Activated B cell treated with CpG ODN at 0.5 μM for 24 hours (primary cell): ENCODE measurements at regions of chr9 and their contacts with region 1.

Region 1: DNA sequence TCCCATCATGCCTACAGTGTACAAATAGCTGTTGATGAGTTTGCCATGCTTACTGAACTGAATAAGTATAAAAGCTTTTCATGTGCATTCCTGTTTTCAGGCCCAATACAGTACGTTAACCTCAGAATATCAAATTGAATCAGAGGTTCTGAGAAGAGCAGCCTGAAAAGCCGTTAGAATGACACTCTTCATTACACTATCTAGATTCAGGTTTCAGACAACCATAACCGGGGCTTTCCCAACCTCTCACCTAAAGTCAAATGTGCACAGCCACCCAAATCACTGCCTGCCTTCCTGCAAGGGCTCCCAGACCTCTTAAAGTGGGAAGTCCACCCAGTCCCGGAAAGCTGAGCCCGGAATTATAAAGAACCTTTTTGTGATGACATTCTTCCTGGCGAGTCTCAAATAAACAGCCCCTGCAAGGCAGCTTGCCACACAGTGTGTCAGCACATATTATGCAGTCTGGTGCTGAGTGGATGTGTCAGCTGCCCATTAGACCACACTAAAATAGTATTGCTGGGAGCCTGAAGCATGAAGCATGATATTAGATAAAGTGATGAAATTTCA is 245.8 kb downstream of the TLE4 start:
- DNase-seq: peak; percentile 24
- ATAC-seq: peak; percentile 72
- H3K4me3 Mint-ChIP-seq: peak overlapping the region; percentile 17
- H3K27ac Mint-ChIP-seq: peak overlapping the region; percentile 47
- H3K4me1 Mint-ChIP-seq: peaks cover 52% of the 10 kb centered on the region
- H3K27me3 Mint-ChIP-seq: peaks cover 2% of the 10 kb centered on the region
- CTCF ChIP-seq: no peak

Region 2: DNA sequence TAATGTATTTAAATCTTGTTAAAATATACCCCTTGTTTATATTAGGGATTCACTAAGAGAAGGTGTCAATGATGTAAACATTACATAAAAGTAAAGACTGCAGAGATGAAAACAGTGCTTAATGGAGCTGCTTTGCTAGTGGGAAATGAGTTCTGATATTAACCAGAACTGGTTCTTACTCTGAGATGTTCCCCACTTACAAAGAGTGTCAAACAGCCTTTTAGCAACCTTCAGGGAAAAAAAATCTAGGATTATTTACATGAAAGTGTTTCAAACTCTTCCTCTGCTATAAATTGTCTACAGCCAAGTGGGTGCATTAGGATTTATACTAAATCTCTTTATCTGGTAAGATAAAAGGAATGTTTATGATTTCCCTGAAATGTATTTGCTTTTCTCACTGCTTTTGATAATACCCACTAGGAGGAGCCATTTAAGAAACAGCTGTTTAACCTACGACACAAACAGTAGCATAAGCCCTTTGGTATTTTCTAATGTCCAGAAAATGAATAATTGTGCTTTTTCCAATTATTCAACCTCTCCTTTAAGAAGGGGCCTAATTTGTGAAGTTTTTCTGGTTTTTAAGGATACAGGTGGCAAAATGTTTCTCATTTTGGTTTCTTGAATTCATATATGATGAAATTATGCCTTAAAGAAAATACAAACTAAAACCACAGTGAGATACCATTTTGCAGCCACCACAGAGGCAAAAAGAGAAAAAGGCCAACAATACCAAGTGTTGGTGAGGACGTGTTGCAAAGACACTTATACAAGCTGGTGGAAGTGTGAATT is 59.4 kb before region 1 on chr9:
- CTCF ChIA-PET with region 1: no interaction called
- POLR2A ChIA-PET with region 1: no interaction called
- intact Hi-C with region 1: loop called (anchors 2 kb)
- DNase-seq: no peak
- ATAC-seq: no peak
- H3K4me3 Mint-ChIP-seq: no peak overlapping the region
- H3K27ac Mint-ChIP-seq: no peak overlapping the region
- H3K4me1 Mint-ChIP-seq: no peaks in the 10 kb centered on the region
- H3K27me3 Mint-ChIP-seq: no peaks in the 10 kb centered on the region
- CTCF ChIP-seq: no peak

Region 3: DNA sequence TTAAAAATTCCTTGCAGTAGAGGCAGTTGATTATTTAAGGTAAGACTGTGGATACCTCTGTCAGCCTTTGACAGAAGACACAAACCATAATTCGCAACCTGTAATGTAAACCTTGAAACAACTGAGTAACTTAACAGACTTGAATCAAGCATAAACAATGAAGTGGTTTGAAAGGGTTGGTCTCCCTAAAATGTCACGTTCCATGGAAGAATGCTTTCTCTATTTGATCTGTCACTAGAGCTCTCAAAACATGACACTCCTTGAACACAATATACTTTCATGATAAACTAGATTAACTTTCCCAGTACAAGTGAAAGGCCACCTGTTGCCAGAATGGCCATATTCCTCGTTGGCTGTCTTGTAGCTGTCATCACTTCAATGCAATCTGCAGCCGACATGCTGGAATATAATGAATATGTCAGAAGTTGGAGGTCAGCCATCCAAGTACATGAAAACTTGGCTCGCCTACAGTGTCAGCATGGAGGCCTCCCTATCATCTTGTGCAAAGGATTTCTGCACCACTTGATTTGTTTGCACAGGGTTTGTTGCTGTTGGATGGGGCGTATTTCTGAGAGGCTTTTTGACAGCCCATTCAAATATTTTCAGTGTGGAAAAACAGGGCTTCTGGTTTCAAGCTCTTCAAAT is 17.7 kb before region 1 on chr9:
- CTCF ChIA-PET with region 1: no interaction called
- POLR2A ChIA-PET with region 1: no interaction called
- intact Hi-C with region 1: no loop called
- DNase-seq: no peak
- ATAC-seq: no peak
- H3K4me3 Mint-ChIP-seq: no peak overlapping the region
- H3K27ac Mint-ChIP-seq: no peak overlapping the region
- H3K4me1 Mint-ChIP-seq: no peaks in the 10 kb centered on the region
- H3K27me3 Mint-ChIP-seq: no peaks in the 10 kb centered on the region
- CTCF ChIP-seq: no peak

Region 4: DNA sequence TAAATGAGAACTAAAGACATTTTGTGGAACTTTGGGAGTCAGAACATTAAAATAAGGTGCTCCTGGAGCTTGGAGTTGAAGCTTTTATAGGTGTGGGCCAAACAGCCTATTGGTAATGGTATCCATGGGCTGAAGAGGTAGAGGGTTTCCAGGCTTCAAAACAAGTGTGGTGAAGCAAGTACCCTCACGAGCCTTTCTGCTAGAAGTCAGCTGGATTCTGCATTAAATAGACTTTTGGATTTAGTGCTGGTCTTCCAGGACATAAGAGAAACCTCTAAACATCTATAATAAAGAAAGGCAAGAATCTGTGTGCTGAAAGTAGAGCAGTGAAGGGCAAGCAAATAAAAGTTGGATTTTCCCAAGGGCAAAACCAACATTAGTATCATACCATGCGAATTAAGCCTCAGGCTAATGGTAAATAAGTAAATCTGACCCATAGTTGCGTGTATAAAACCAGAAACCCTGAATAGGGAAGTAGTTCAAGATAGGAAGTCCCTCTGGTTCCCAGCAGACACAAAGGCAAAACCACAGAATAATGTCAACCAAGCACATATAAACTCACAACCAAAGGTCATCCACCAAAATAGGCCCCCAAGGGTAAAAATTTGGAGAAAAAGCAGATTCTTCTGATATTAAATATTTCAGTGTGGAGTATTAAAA is 60.6 kb after region 1 on chr9:
- CTCF ChIA-PET with region 1: no interaction called
- POLR2A ChIA-PET with region 1: interaction called, 6 read pairs
- intact Hi-C with region 1: loop called (anchors 1 kb)
- DNase-seq: no peak
- ATAC-seq: peak; percentile 82
- H3K4me3 Mint-ChIP-seq: peak overlapping the region; percentile 13
- H3K27ac Mint-ChIP-seq: peak overlapping the region; percentile 13
- H3K4me1 Mint-ChIP-seq: peaks cover 51% of the 10 kb centered on the region
- H3K27me3 Mint-ChIP-seq: no peaks in the 10 kb centered on the region
- CTCF ChIP-seq: no peak

Region 5: GRCh38 chr9:79946712-79947111 is 129.2 kb after region 1 on chr9:
- CTCF ChIA-PET with region 1: no interaction called
- POLR2A ChIA-PET with region 1: no interaction called
- intact Hi-C with region 1: loop called (anchors 5 kb)
- DNase-seq: no peak
- ATAC-seq: no peak
- H3K4me3 Mint-ChIP-seq: no peak overlapping the region
- H3K27ac Mint-ChIP-seq: no peak overlapping the region
- H3K4me1 Mint-ChIP-seq: no peaks in the 10 kb centered on the region
- H3K27me3 Mint-ChIP-seq: no peaks in the 10 kb centered on the region
- CTCF ChIP-seq: no peak

Region 6: DNA sequence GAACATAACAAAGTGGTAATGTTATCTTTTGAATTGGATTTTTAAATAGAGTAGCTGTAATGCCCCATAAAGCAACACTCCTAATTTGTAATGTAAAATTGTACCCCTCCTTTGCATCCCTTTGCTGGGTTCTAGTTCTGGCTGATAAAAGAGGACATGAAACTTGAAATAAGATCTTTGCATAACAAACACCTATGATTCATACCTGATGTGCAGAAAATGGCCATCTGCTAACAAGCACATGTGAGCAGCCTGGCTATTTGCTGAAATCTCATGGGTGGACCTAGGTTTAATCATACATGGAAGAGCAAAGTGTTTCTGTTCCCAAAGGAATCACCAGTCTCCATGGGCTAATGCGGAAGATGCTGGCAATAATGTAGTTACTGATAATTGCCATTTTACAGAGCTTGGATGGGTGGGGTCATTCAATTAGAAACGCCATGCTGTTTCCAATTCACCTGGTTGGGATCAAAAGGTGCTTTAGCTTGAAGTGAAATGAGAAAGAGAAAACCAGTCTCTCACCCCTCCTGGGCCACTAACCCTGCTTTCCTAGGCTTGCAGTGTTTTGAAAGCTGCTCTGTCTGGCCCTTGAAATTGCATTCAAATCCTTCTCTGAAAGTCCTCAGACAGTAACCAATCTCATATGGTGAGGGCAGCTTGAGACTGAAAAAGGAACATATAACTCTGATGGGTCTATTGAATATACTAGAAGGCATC is 339.4 kb after region 1 on chr9:
- CTCF ChIA-PET with region 1: no interaction called
- POLR2A ChIA-PET with region 1: no interaction called
- intact Hi-C with region 1: loop called (anchors 5 kb)
- DNase-seq: no peak
- ATAC-seq: peak; percentile 88
- H3K4me3 Mint-ChIP-seq: no peak overlapping the region
- H3K27ac Mint-ChIP-seq: peak overlapping the region; percentile 73
- H3K4me1 Mint-ChIP-seq: peaks cover 51% of the 10 kb centered on the region
- H3K27me3 Mint-ChIP-seq: no peaks in the 10 kb centered on the region
- CTCF ChIP-seq: no peak

Region 7: GRCh38 chr9:81259896-81260295 is 1442.4 kb after region 1 on chr9:
- CTCF ChIA-PET with region 1: no interaction called
- POLR2A ChIA-PET with region 1: no interaction called
- intact Hi-C with region 1: no loop called
- DNase-seq: no peak
- ATAC-seq: no peak
- H3K4me3 Mint-ChIP-seq: no peak overlapping the region
- H3K27ac Mint-ChIP-seq: no peak overlapping the region
- H3K4me1 Mint-ChIP-seq: no peaks in the 10 kb centered on the region
- H3K27me3 Mint-ChIP-seq: no peaks in the 10 kb centered on the region
- CTCF ChIP-seq: no peak